Activated CD4-positive, alpha-beta memory T cell treated with anti-CD3 and anti-CD28 coated beads for 36 hours (primary cell): ENCODE measurements at regions of chr18 and their contacts with region 1.

Region 1: GRCh38 chr18:59056706-59057492 is 82.8 kb upstream of the SEC11C start:
- DNase-seq: peak; percentile 82
- H3K4me3 Mint-ChIP-seq: no peak overlapping the region
- H3K27ac Mint-ChIP-seq: no peak overlapping the region
- H3K4me1 Mint-ChIP-seq: no peaks in the 10 kb centered on the region
- H3K27me3 Mint-ChIP-seq: peaks cover 9% of the 10 kb centered on the region

Region 2: GRCh38 chr18:58781627-58782194 is 275.2 kb before region 1 on chr18:
- CTCF ChIA-PET with region 1: interaction called, 9 read pairs
- POLR2A ChIA-PET with region 1: no interaction called
- intact Hi-C with region 1: loop called (anchors 1 kb)
- DNase-seq: peak; percentile 80
- H3K4me3 Mint-ChIP-seq: no peak overlapping the region
- H3K27ac Mint-ChIP-seq: no peak overlapping the region
- H3K4me1 Mint-ChIP-seq: no peaks in the 10 kb centered on the region
- H3K27me3 Mint-ChIP-seq: peaks cover 14% of the 10 kb centered on the region